Esophagus squamous epithelium (tissue), 5 donors: ENCODE measurements at regions of chr1 and their contacts with region 1.

Region 1: GRCh38 chr1:183023601-183024316 is 539 bp downstream of the LAMC1 start:
- DNase-seq: no peak
- H3K4me3 ChIP-seq: peak overlapping the region; percentile 78 to 96 (median 80)
- H3K27ac ChIP-seq: peak overlapping the region; percentile 99 to 100 (median 100)
- H3K4me1 ChIP-seq: peaks cover 3 to 58% (median 17%) of the 10 kb centered on the region in 3 donors
- H3K27me3 ChIP-seq: peaks cover 0 to 18% (median 0%) of the 10 kb centered on the region in 4 donors
- CTCF ChIP-seq: peak; percentile 50 to 65 (median 56)
- POLR2A ChIP-seq: no peak

Region 2: DNA sequence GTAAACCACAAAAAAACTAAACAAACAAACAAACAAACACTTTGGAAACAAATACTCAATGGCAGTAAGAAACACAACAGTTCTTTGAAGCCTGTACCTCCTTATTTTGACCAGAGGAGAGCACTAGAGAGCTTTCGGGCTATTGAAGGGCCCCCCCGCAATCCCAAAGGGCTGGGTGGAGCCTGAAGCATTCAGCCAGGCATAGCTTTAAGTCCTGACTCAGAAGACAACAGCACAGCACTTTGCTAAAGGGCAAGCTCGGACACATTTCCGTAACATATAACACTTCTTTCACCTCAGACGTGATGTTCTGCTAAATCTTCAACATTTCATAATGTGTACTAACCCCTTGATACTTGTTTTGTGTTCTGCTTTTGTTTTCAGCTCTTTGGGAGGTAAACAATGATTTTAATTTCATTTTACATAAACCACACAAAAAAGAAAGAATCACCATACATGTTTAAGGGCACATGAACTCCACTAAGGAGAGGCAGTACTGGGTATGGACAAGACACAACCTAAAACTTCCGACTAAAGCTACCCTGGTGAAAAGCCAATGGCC is 61.1 kb before region 1 on chr1:
- intact Hi-C with region 1: loop called (anchors 10 kb)
- DNase-seq: peak; percentile 16
- H3K4me3 ChIP-seq: peak overlapping the region in 3 of 4 donors; percentile 18 to 56 (median 21)
- H3K27ac ChIP-seq: peak overlapping the region; percentile 65 to 83 (median 73)
- H3K4me1 ChIP-seq: peaks cover 0 to 9% (median 0%) of the 10 kb centered on the region in 3 donors
- H3K27me3 ChIP-seq: no peaks in the 10 kb centered on the region
- CTCF ChIP-seq: peak; percentile 74 to 97 (median 92)
- POLR2A ChIP-seq: peak in 1 of 4 donors; percentile 25

Region 3: DNA sequence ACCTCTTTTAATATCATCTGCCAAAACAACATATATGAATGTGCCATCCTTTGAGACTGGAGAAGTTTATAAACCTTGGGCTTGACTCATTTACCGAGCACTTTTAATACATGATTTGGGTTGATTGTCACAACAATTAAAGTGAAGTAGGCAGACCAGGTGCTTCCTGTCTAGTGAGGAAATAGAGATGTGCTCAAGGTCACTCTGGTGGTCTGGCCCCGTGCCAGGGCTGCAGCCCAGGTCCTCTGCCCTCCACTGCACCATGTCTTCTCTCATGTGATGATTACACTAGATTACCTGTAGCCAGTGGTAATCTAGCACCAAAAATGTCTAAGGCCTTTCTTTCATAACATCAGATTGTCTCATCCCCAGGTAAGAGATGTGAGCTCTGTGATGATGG is 100.5 kb after region 1 on chr1:
- intact Hi-C with region 1: loop called (anchors 10 kb)
- DNase-seq: no peak
- H3K4me3 ChIP-seq: no peak overlapping the region
- H3K27ac ChIP-seq: peak overlapping the region in 2 of 4 donors; percentile 24 to 26
- H3K4me1 ChIP-seq: peaks cover 0 to 21% (median 4%) of the 10 kb centered on the region in 3 donors
- H3K27me3 ChIP-seq: no peaks in the 10 kb centered on the region
- CTCF ChIP-seq: no peak
- POLR2A ChIP-seq: no peak

Region 4: GRCh38 chr1:183227963-183228649 is 204.3 kb after region 1 on chr1:
- intact Hi-C with region 1: loop called (anchors 10 kb)
- DNase-seq: no peak
- H3K4me3 ChIP-seq: no peak overlapping the region
- H3K27ac ChIP-seq: no peak overlapping the region
- H3K4me1 ChIP-seq: peaks cover 0 to 27% (median 2%) of the 10 kb centered on the region in 3 donors
- H3K27me3 ChIP-seq: no peaks in the 10 kb centered on the region
- CTCF ChIP-seq: peak; percentile 22 to 79 (median 60)
- POLR2A ChIP-seq: no peak